CD8-positive, alpha-beta T cell (primary cell): ENCODE measurements at regions of chr11 and their contacts with region 1.

Region 1: GRCh38 chr11:14907411-14908213 is 15.6 kb upstream of the CYP2R1 start:
- DNase-seq: peak; percentile 73 to 90 (median 85)
- ATAC-seq: peak; percentile 51
- H3K4me3 ChIP-seq: no peak overlapping the region
- H3K4me3 Mint-ChIP-seq: no peak overlapping the region
- H3K27ac ChIP-seq: no peak overlapping the region
- H3K27ac Mint-ChIP-seq: no peak overlapping the region
- H3K4me1 ChIP-seq: peaks cover 16% of the 10 kb centered on the region
- H3K4me1 Mint-ChIP-seq: peaks cover 41% of the 10 kb centered on the region
- H3K27me3 ChIP-seq: no peaks in the 10 kb centered on the region
- H3K27me3 Mint-ChIP-seq: no peaks in the 10 kb centered on the region
- CTCF ChIP-seq: peak; percentile 82

Region 2: DNA sequence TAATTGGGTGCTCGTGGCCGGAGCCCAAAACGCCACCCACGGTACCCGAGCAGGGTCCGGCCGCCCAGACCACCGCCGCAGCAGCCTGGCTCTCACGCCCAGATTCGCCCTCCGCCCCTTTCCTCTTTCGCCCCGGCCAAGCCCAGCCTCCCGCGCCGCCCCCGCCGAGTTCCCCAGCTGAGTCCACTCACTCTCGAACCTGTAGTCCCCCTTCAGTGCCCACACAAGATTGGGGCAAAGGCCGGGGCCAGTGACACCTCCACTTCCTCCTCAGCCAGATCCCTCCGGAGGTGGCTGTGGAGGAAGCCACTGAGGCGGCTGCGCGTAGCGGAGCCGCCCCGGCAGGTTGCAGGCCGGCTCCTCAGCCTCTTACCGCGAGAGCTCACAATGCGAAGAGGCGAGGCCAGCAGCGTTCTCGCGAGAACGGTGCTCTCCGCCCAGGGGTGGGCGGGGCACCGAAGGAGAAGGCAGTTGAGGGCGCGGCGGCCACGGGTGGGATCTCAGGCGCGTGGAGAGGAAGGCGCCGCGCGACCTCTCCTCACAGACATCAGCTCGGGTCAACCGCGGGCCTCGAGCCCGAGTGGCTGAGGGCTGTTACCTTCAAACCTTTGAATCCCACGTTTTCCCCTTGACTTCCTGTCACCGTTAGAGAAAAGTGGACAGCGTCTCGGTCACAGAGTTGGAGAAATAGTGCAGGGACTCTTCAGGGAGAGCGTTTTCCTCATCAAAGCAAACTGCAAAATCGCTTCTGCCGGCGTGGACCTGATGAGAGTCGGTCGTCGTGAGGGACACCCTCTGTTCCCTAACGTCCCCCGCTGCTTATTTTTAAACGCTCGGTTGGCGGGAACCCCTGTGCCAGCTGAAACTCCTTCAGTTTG is 1444.5 kb before region 1 on chr11 and contains the start of gene BTBD10:
- CTCF ChIA-PET with region 1: no interaction called
- POLR2A ChIA-PET with region 1: no interaction called
- intact Hi-C with region 1: loop called in 1 of 2 experiments (anchors 10 kb)
- DNase-seq: peak; percentile 81 to 98 (median 90)
- ATAC-seq: peak; percentile 98
- H3K4me3 ChIP-seq: peak within 1 kb of the TSS; percentile 69 to 92
- H3K4me3 Mint-ChIP-seq: peak within 1 kb of the TSS; percentile 98
- H3K27ac ChIP-seq: peak within 1 kb of the TSS; percentile 87 to 92
- H3K27ac Mint-ChIP-seq: peak within 1 kb of the TSS; percentile 96
- H3K4me1 ChIP-seq: peaks cover 18% of the 10 kb centered on the region
- H3K4me1 Mint-ChIP-seq: peaks cover 49% of the 10 kb centered on the region
- H3K27me3 ChIP-seq: no peaks in the 10 kb centered on the region
- H3K27me3 Mint-ChIP-seq: no peaks in the 10 kb centered on the region
- CTCF ChIP-seq: no peak
- total RNA-seq, gene BTBD10: 17.0 to 19.2 TPM

Region 3: GRCh38 chr11:14499554-14500180 is 407.9 kb before region 1 on chr11 and contains the start of gene COPB1:
- CTCF ChIA-PET with region 1: interaction called, 7 read pairs
- POLR2A ChIA-PET with region 1: interaction called, 3 read pairs
- intact Hi-C with region 1: loop called in 1 of 2 experiments (anchors 1 kb)
- DNase-seq: peak; percentile 84 to 96 (median 92)
- ATAC-seq: peak; percentile 94
- H3K4me3 ChIP-seq: peak within 1 kb of the TSS; percentile 74 to 75
- H3K4me3 Mint-ChIP-seq: peak within 1 kb of the TSS; percentile 99
- H3K27ac ChIP-seq: peak within 1 kb of the TSS; percentile 65 to 82
- H3K27ac Mint-ChIP-seq: peak within 1 kb of the TSS; percentile 100
- H3K4me1 ChIP-seq: peaks cover 30% of the 10 kb centered on the region
- H3K4me1 Mint-ChIP-seq: peaks cover 51% of the 10 kb centered on the region
- H3K27me3 ChIP-seq: no peaks in the 10 kb centered on the region
- H3K27me3 Mint-ChIP-seq: no peaks in the 10 kb centered on the region
- CTCF ChIP-seq: no peak
- total RNA-seq, gene COPB1: 108 to 114 TPM

Region 4: GRCh38 chr11:14544611-14545010 is 363.0 kb before region 1 on chr11:
- CTCF ChIA-PET with region 1: interaction called, 14 read pairs
- POLR2A ChIA-PET with region 1: no interaction called
- intact Hi-C with region 1: loop called in 1 of 2 experiments (anchors 5 kb)
- DNase-seq: peak in 2 of 9 experiments; percentile 5 to 26
- ATAC-seq: no peak
- H3K4me3 ChIP-seq: no peak overlapping the region
- H3K4me3 Mint-ChIP-seq: no peak overlapping the region
- H3K27ac ChIP-seq: no peak overlapping the region
- H3K27ac Mint-ChIP-seq: no peak overlapping the region
- H3K4me1 ChIP-seq: peaks cover 10% of the 10 kb centered on the region
- H3K4me1 Mint-ChIP-seq: peaks cover 35% of the 10 kb centered on the region
- H3K27me3 ChIP-seq: no peaks in the 10 kb centered on the region
- H3K27me3 Mint-ChIP-seq: no peaks in the 10 kb centered on the region
- CTCF ChIP-seq: no peak

Region 5: GRCh38 chr11:14789879-14790484 is 117.6 kb before region 1 on chr11:
- CTCF ChIA-PET with region 1: interaction called, 64 read pairs
- POLR2A ChIA-PET with region 1: no interaction called
- intact Hi-C with region 1: loop called (anchors 1 kb)
- DNase-seq: peak in 2 of 9 experiments; percentile 35 to 54
- ATAC-seq: no peak
- H3K4me3 ChIP-seq: no peak overlapping the region
- H3K4me3 Mint-ChIP-seq: no peak overlapping the region
- H3K27ac ChIP-seq: no peak overlapping the region
- H3K27ac Mint-ChIP-seq: peak overlapping the region; percentile 79
- H3K4me1 ChIP-seq: peaks cover 2% of the 10 kb centered on the region
- H3K4me1 Mint-ChIP-seq: peaks cover 31% of the 10 kb centered on the region
- H3K27me3 ChIP-seq: no peaks in the 10 kb centered on the region
- H3K27me3 Mint-ChIP-seq: no peaks in the 10 kb centered on the region
- CTCF ChIP-seq: peak; percentile 68

Region 6: GRCh38 chr11:15006139-15006759 is 98.6 kb after region 1 on chr11:
- CTCF ChIA-PET with region 1: interaction called, 63 read pairs
- POLR2A ChIA-PET with region 1: interaction called, 3 read pairs
- intact Hi-C with region 1: loop called (anchors 1 to 5 kb)
- DNase-seq: peak in 3 of 9 experiments; percentile 13 to 61 (median 50)
- ATAC-seq: peak; percentile 34
- H3K4me3 ChIP-seq: no peak overlapping the region
- H3K4me3 Mint-ChIP-seq: no peak overlapping the region
- H3K27ac ChIP-seq: no peak overlapping the region
- H3K27ac Mint-ChIP-seq: no peak overlapping the region
- H3K4me1 ChIP-seq: no peaks in the 10 kb centered on the region
- H3K4me1 Mint-ChIP-seq: no peaks in the 10 kb centered on the region
- H3K27me3 ChIP-seq: no peaks in the 10 kb centered on the region
- H3K27me3 Mint-ChIP-seq: peaks cover 34% of the 10 kb centered on the region
- CTCF ChIP-seq: peak; percentile 56

Region 7: DNA sequence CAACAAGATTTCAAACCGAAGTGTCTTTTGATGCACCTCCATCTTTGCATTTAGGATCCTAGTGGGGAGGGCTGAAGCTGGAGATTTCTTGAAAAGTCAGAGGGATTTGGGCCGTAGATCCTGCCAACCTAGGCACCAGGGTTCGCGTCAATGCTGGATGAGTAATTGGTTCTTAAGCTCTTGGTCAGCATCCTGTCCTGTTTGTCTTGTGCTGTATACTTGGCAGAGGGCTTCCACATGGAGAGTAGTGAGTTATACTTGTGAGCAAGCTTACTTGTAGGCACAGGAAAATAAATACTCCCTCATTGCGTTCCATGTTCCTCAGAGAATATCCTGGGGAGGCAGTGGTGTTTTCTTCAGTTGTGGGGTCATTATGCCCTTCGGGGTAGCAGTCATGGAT is 219.7 kb after region 1 on chr11:
- CTCF ChIA-PET with region 1: no interaction called
- POLR2A ChIA-PET with region 1: no interaction called
- intact Hi-C with region 1: no loop called
- DNase-seq: no peak
- ATAC-seq: no peak
- H3K4me3 ChIP-seq: no peak overlapping the region
- H3K4me3 Mint-ChIP-seq: no peak overlapping the region
- H3K27ac ChIP-seq: no peak overlapping the region
- H3K27ac Mint-ChIP-seq: no peak overlapping the region
- H3K4me1 ChIP-seq: no peaks in the 10 kb centered on the region
- H3K4me1 Mint-ChIP-seq: no peaks in the 10 kb centered on the region
- H3K27me3 ChIP-seq: peaks cover 0 to 2% of the 10 kb centered on the region in 2 experiments
- H3K27me3 Mint-ChIP-seq: peaks cover 19% of the 10 kb centered on the region
- CTCF ChIP-seq: no peak

Region 8: GRCh38 chr11:15208378-15209222 is 301.0 kb after region 1 on chr11:
- CTCF ChIA-PET with region 1: interaction called, 74 read pairs
- POLR2A ChIA-PET with region 1: no interaction called
- intact Hi-C with region 1: loop called in 1 of 2 experiments (anchors 1 kb)
- DNase-seq: peak; percentile 53 to 85 (median 73)
- ATAC-seq: peak; percentile 73
- H3K4me3 ChIP-seq: no peak overlapping the region
- H3K4me3 Mint-ChIP-seq: no peak overlapping the region
- H3K27ac ChIP-seq: no peak overlapping the region
- H3K27ac Mint-ChIP-seq: no peak overlapping the region
- H3K4me1 ChIP-seq: no peaks in the 10 kb centered on the region
- H3K4me1 Mint-ChIP-seq: no peaks in the 10 kb centered on the region
- H3K27me3 ChIP-seq: no peaks in the 10 kb centered on the region
- H3K27me3 Mint-ChIP-seq: peaks cover 3% of the 10 kb centered on the region
- CTCF ChIP-seq: peak; percentile 75